ENCODE measurements at regions of chr15 and their contacts with region 1.

Region 1: GRCh38 chr15:75201609-75202250 is at the start of gene C15orf39:
- DNase-seq: peak; percentile 66 to 88 (median 84)
- ATAC-seq: peak; percentile 78
- H3K4me3 ChIP-seq: peak within 1 kb of the TSS; percentile 84
- H3K4me3 Mint-ChIP-seq: peak within 1 kb of the TSS; percentile 89 to 98 (median 94)
- H3K27ac ChIP-seq: peak within 1 kb of the TSS; percentile 92
- H3K27ac Mint-ChIP-seq: peak within 1 kb of the TSS; percentile 69 to 95 (median 88)
- H3K4me1 ChIP-seq: peaks cover 26 to 27% of the 10 kb centered on the region in 2 donors
- H3K4me1 Mint-ChIP-seq: peaks cover 19 to 68% (median 39%) of the 10 kb centered on the region in 7 donors
- H3K27me3 ChIP-seq: no peaks in the 10 kb centered on the region
- H3K27me3 Mint-ChIP-seq: no peaks in the 10 kb centered on the region
- total RNA-seq, gene C15orf39: 30.9 to 124 (median 50.5) TPM

Region 2: GRCh38 chr15:74373731-74374647 is 827.7 kb before region 1 on chr15:
- CTCF ChIA-PET with region 1: interaction called, 3 read pairs
- POLR2A ChIA-PET with region 1: no interaction called
- intact Hi-C with region 1: loop called in 1 of 2 experiments (anchors 2 kb)
- DNase-seq: peak; percentile 82 to 94 (median 91)
- ATAC-seq: peak; percentile 97
- H3K4me3 ChIP-seq: peak overlapping the region; percentile 98
- H3K4me3 Mint-ChIP-seq: peak overlapping the region; percentile 68 to 89 (median 84)
- H3K27ac ChIP-seq: peak overlapping the region; percentile 62
- H3K27ac Mint-ChIP-seq: peak overlapping the region; percentile 18 to 82 (median 40)
- H3K4me1 ChIP-seq: peaks cover 9% of the 10 kb centered on the region in 2 donors
- H3K4me1 Mint-ChIP-seq: peaks cover 0 to 32% (median 15%) of the 10 kb centered on the region in 7 donors
- H3K27me3 ChIP-seq: no peaks in the 10 kb centered on the region
- H3K27me3 Mint-ChIP-seq: peaks cover 0 to 31% (median 5%) of the 10 kb centered on the region in 5 donors

Region 3: GRCh38 chr15:74937596-74938296 is 264.0 kb before region 1 on chr15 and contains the start of gene COX5A:
- CTCF ChIA-PET with region 1: no interaction called
- POLR2A ChIA-PET with region 1: no interaction called
- intact Hi-C with region 1: loop called in 1 of 2 experiments (anchors 1 kb)
- DNase-seq: peak; percentile 86 to 94 (median 92)
- ATAC-seq: peak; percentile 99
- H3K4me3 ChIP-seq: peak within 1 kb of the TSS; percentile 62
- H3K4me3 Mint-ChIP-seq: peak within 1 kb of the TSS; percentile 87 to 97 (median 94)
- H3K27ac ChIP-seq: peak within 1 kb of the TSS; percentile 85
- H3K27ac Mint-ChIP-seq: peak within 1 kb of the TSS; percentile 85 to 95 (median 91)
- H3K4me1 ChIP-seq: peaks cover 0 to 17% of the 10 kb centered on the region in 2 donors
- H3K4me1 Mint-ChIP-seq: peaks cover 16 to 38% (median 26%) of the 10 kb centered on the region in 7 donors
- H3K27me3 ChIP-seq: no peaks in the 10 kb centered on the region
- H3K27me3 Mint-ChIP-seq: peaks cover 0 to 3% (median 0%) of the 10 kb centered on the region in 5 donors
- total RNA-seq, gene COX5A: 44.4 to 210 (median 59.2) TPM

Region 4: DNA sequence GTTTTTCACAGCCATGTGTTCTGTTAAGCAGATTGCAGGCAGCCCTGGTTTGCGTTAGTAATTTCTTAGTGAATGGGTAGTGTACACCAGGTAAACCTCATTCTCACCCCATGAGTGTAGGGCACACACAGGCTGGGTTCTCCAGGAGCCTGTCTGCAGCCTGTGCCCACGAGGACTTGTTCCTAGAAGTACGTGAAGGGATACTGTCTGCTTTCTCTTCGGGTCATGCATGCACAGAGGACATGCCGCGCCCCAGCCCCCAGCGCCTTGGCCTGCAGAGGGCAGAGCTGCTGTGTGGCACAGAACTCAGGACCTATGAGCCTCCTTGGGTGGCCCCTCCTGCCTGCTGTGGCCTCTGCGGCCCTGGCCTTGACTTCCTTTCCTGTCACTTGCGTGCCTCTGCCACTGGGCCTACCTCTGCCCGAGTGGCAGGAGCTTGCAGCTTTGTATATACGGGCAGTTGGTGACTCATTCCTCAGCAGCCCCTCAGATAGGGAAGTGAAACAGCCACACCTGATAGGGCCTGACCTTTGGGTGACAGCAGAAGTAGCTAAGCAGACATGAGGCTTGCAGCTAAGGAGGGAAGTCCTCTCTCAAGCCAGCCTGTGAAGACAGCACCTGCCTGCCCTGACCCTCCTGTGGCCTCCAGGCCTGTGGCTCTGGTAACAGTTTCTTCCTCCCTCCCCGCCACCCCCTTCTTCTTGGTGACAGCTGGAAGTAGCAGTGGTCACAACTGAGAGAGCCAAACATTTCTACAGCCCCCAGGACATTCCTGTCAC is 158.8 kb before region 1 on chr15:
- CTCF ChIA-PET with region 1: interaction called, 5 read pairs
- POLR2A ChIA-PET with region 1: interaction called, 3 read pairs
- intact Hi-C with region 1: loop called (anchors 1 kb)
- DNase-seq: peak in 3 of 9 donors; percentile 16 to 65 (median 45)
- ATAC-seq: peak; percentile 85
- H3K4me3 ChIP-seq: no peak overlapping the region
- H3K4me3 Mint-ChIP-seq: peak overlapping the region in 2 of 10 donors; percentile 48 to 79
- H3K27ac ChIP-seq: no peak overlapping the region
- H3K27ac Mint-ChIP-seq: peak overlapping the region in 2 of 9 donors; percentile 28 to 84
- H3K4me1 ChIP-seq: peaks cover 0 to 5% of the 10 kb centered on the region in 2 donors
- H3K4me1 Mint-ChIP-seq: peaks cover 0 to 86% (median 14%) of the 10 kb centered on the region in 7 donors
- H3K27me3 ChIP-seq: no peaks in the 10 kb centered on the region
- H3K27me3 Mint-ChIP-seq: no peaks in the 10 kb centered on the region

Region 5: GRCh38 chr15:75061272-75061671 is 140.5 kb before region 1 on chr15:
- CTCF ChIA-PET with region 1: no interaction called
- POLR2A ChIA-PET with region 1: no interaction called
- intact Hi-C with region 1: no loop called
- DNase-seq: no peak
- ATAC-seq: peak; percentile 76
- H3K4me3 ChIP-seq: no peak overlapping the region
- H3K4me3 Mint-ChIP-seq: peak overlapping the region in 1 of 10 donors; percentile 33
- H3K27ac ChIP-seq: no peak overlapping the region
- H3K27ac Mint-ChIP-seq: peak overlapping the region in 2 of 9 donors; percentile 38 to 46
- H3K4me1 ChIP-seq: peaks cover 2 to 10% of the 10 kb centered on the region in 2 donors
- H3K4me1 Mint-ChIP-seq: peaks cover 7 to 59% (median 12%) of the 10 kb centered on the region in 7 donors
- H3K27me3 ChIP-seq: no peaks in the 10 kb centered on the region
- H3K27me3 Mint-ChIP-seq: no peaks in the 10 kb centered on the region

Region 6: GRCh38 chr15:75182187-75183131 is 19.3 kb before region 1 on chr15:
- CTCF ChIA-PET with region 1: interaction called, 3 read pairs
- POLR2A ChIA-PET with region 1: interaction called, 4 read pairs
- intact Hi-C with region 1: loop called in 1 of 2 experiments (anchors 2 kb)
- DNase-seq: no peak
- ATAC-seq: no peak
- H3K4me3 ChIP-seq: no peak overlapping the region
- H3K4me3 Mint-ChIP-seq: no peak overlapping the region
- H3K27ac ChIP-seq: no peak overlapping the region
- H3K27ac Mint-ChIP-seq: peak overlapping the region in 1 of 9 donors; percentile 35
- H3K4me1 ChIP-seq: no peaks in the 10 kb centered on the region
- H3K4me1 Mint-ChIP-seq: peaks cover 5 to 22% (median 11%) of the 10 kb centered on the region in 7 donors
- H3K27me3 ChIP-seq: peaks cover 0 to 7% of the 10 kb centered on the region in 2 donors
- H3K27me3 Mint-ChIP-seq: peaks cover 28 to 48% (median 39%) of the 10 kb centered on the region in 5 donors

Region 7: DNA sequence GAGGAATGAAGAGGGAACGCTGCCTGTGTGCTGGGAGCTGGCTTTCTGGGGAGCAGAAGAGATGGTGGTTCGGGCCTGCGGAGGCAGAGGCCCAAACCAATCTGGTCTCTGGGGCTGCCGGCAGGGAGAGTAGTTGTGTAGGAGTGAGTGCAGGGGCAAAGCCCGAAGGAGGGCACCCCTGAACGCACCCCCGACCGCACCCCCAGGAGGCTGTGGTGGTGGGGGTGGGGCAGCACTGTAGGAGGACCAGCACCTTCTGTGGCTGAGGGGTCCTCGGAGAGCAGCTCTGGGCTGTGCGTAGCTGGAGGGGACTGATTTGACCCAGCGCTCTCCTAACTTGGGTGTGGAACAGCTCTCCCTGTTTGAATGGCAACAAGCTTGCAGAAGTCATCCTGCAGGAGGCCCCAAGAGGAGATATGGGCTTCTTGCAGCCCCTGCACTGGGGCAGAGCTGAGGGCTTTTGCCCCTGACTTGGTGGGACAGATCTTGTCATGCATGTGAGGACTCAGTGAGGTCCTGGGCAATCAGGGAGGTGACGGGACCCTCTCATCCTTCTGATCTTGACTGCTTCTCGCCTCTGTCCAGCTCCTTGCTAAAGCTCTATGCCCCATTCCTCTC is 26.0 kb after region 1 on chr15:
- CTCF ChIA-PET with region 1: no interaction called
- POLR2A ChIA-PET with region 1: no interaction called
- intact Hi-C with region 1: no loop called
- DNase-seq: peak in 1 of 9 donors; percentile 1
- ATAC-seq: no peak
- H3K4me3 ChIP-seq: no peak overlapping the region
- H3K4me3 Mint-ChIP-seq: no peak overlapping the region
- H3K27ac ChIP-seq: no peak overlapping the region
- H3K27ac Mint-ChIP-seq: no peak overlapping the region
- H3K4me1 ChIP-seq: no peaks in the 10 kb centered on the region
- H3K4me1 Mint-ChIP-seq: peaks cover 0 to 5% (median 0%) of the 10 kb centered on the region in 7 donors
- H3K27me3 ChIP-seq: no peaks in the 10 kb centered on the region
- H3K27me3 Mint-ChIP-seq: peaks cover 0 to 16% (median 11%) of the 10 kb centered on the region in 5 donors

Region 8: DNA sequence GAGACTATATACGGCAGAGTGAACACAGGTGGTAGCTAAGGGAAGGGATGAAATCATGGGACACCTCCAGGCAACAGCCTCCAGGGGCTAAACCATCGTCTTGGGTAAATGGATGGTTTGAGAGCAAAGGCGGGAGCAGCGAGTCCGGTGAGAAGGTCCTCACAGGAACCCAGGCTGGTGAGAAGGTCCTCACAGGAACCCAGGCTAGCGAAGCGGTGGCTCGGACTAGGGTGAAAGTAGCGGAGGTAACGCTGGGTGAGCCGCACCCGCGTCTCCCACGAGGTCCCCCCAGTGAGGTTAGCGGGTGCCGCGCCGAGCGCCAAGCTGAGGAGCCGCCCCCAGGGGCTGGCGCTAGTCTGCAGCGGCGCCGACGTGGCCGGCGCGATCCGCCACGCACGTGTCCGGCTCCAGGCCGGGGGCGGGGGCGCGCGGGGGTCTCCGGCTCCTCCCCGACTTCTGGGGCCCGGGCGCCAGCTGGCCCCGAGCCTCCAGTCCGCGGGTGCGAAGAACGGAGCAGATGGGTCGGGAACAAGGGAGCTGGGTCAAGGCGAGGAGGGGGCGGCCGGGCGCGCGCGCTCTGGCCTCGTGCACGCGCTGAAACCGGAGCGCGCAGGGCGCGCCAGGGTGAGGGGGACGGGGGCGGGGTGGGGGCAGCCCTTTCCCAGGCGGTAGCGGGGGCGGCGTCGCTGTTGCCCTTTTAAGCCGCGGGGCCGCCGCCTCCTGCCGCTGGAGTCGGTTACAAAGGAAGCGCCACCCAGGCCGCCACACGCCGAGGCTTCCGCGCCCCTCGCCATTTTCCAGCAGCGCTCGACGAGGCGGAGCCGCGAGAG is 641.2 kb after region 1 on chr15 and contains the start of gene UBE2Q2:
- CTCF ChIA-PET with region 1: no interaction called
- POLR2A ChIA-PET with region 1: no interaction called
- intact Hi-C with region 1: loop called in 1 of 2 experiments (anchors 5 kb)
- DNase-seq: peak; percentile 45 to 78 (median 67)
- ATAC-seq: peak; percentile 75
- H3K4me3 ChIP-seq: peak within 1 kb of the TSS; percentile 68
- H3K4me3 Mint-ChIP-seq: peak within 1 kb of the TSS; percentile 85 to 99 (median 96)
- H3K27ac ChIP-seq: peak within 1 kb of the TSS; percentile 76
- H3K27ac Mint-ChIP-seq: peak within 1 kb of the TSS; percentile 85 to 97 (median 92)
- H3K4me1 ChIP-seq: peaks cover 20 to 30% of the 10 kb centered on the region in 2 donors
- H3K4me1 Mint-ChIP-seq: peaks cover 37 to 50% (median 45%) of the 10 kb centered on the region in 7 donors
- H3K27me3 ChIP-seq: no peaks in the 10 kb centered on the region
- H3K27me3 Mint-ChIP-seq: peaks cover 0 to 20% (median 0%) of the 10 kb centered on the region in 5 donors
- total RNA-seq, gene UBE2Q2: 28.2 to 32.1 (median 28.8) TPM